HepG2 (cell line): ENCODE measurements at regions of chr4 and their contacts with region 1.

Region 1: GRCh38 chr4:153750197-153750817 is 9.5 kb downstream of the RNF175 start:
- DNase-seq: peak; percentile 61
- ATAC-seq: peak; percentile 91
- H3K4me3 ChIP-seq: no peak overlapping the region
- H3K27ac ChIP-seq: no peak overlapping the region
- H3K4me1 ChIP-seq: no peaks in the 10 kb centered on the region
- H3K27me3 ChIP-seq: 0 out of 5 replicates have a peak, but pooled peaks cover 0 to 5% of the 10 kb centered on the region in 2 experiments
- CTCF ChIP-seq: peak; percentile 81
- EP300 ChIP-seq: no peak
- POLR2A ChIP-seq: no peak
- RAD21 ChIP-seq: no peak

Region 2: GRCh38 chr4:153634738-153635353 is 115.5 kb before region 1 on chr4:
- CTCF ChIA-PET with region 1: no interaction called
- POLR2A ChIA-PET with region 1: no interaction called
- in situ Hi-C with region 1: no loop called
- intact Hi-C with region 1: loop called (anchors 1 kb)
- DNase-seq: peak; percentile 9
- ATAC-seq: peak; percentile 56; the same call in 2 of the 3 replicates
- H3K4me3 ChIP-seq: no peak overlapping the region
- H3K27ac ChIP-seq: no peak overlapping the region
- H3K4me1 ChIP-seq: peaks cover 9% of the 10 kb centered on the region
- H3K27me3 ChIP-seq: no peaks in the 10 kb centered on the region
- CTCF ChIP-seq: peak; percentile 62
- EP300 ChIP-seq: no peak
- POLR2A ChIP-seq: no peak
- RAD21 ChIP-seq: peak; percentile 16; the same call in 1 of the 2 replicates